GM10248 (cell line): ENCODE measurements at regions of chr18 and their contacts with region 1.

Region 1: DNA sequence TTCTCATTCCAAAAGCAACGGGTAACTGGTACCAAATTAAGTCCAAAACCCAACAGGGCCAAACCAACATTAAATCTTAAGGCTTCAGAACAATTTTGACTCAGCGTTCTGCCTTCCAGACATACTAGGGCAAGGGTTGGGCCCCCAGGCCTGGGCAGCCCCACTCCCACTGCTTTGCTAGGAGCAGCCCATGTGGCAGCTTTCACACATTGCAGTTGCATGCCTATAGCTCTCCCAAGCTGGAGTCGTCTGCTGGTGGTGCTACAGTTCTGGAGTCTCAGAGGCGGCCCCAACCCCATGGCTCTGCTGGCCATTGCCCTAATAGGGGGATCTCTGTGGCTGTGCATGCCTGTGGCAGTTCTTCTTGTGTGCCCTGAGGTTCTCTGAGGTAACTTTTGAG is 37.6 kb upstream of the CD226 start:
- DNase-seq: no peak
- CTCF ChIP-seq: no peak

Region 2: GRCh38 chr18:70004696-70005095 is 19.5 kb after region 1 on chr18:
- CTCF ChIA-PET with region 1: interaction called, 10 read pairs
- POLR2A ChIA-PET with region 1: no interaction called
- DNase-seq: no peak
- CTCF ChIP-seq: no peak

Region 3: DNA sequence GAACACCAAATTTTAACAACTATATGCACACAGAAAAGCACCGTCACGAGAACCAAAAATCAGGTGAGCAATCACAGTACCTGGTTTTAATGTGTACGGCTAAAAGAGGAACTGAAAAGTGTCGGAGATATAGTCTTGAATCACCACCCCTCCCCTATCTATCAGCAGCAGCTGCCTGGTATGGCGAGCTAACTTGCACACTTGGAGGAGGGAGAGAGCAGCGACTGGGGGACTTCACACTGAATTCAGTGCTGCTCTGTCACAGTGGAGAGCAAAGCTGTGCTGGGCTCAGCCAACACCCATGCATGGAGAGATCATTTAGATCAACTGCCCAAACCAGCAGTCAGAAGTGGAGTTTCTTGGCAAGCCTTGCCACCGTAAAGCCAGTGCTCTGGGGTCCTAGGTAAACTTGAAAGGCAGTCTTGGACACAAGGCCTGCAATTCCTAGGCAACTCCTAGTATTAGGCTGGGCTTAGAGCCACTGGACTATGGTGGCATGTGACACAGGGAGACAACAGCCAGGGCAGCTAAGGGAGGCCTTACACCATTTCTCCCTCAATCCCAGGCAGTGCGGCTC is 51.6 kb after region 1 on chr18:
- CTCF ChIA-PET with region 1: no interaction called
- POLR2A ChIA-PET with region 1: no interaction called
- DNase-seq: peak; percentile 63
- CTCF ChIP-seq: no peak